ENCODE measurements at regions of chr15 and their contacts with region 1.

Region 1: GRCh38 chr15:73991726-73992593 is at the start of gene STOML1:
- DNase-seq: peak; percentile 85 to 96 (median 92)
- ATAC-seq: peak; percentile 81 to 85
- H3K4me3 Mint-ChIP-seq: peak within 1 kb of the TSS; percentile 78 to 99 (median 86)
- H3K27ac Mint-ChIP-seq: peak within 1 kb of the TSS; percentile 75 to 86 (median 80)
- H3K4me1 Mint-ChIP-seq: peaks cover 24 to 63% (median 51%) of the 10 kb centered on the region in 4 donors
- H3K27me3 Mint-ChIP-seq: no peaks in the 10 kb centered on the region
- polyA plus RNA-seq, gene STOML1: 9.6 to 15.6 (median 12.6) TPM

Region 2: GRCh38 chr15:73972984-73973682 is 18.8 kb before region 1 on chr15:
- POLR2A ChIA-PET with region 1: interaction called, 10 read pairs
- DNase-seq: peak; percentile 62 to 85 (median 77)
- ATAC-seq: peak; percentile 80
- H3K4me3 Mint-ChIP-seq: peak overlapping the region in 7 of 10 donors; percentile 15 to 80 (median 36)
- H3K27ac Mint-ChIP-seq: peak overlapping the region in 2 of 10 donors; percentile 7 to 32
- H3K4me1 Mint-ChIP-seq: peaks cover 14 to 38% (median 32%) of the 10 kb centered on the region in 4 donors
- H3K27me3 Mint-ChIP-seq: peaks cover 0 to 18% (median 3%) of the 10 kb centered on the region in 5 donors

Region 3: GRCh38 chr15:74007820-74008371 is 15.9 kb after region 1 on chr15:
- POLR2A ChIA-PET with region 1: interaction called, 28 read pairs
- DNase-seq: peak in 3 of 10 donors; percentile 19 to 46 (median 34)
- ATAC-seq: peak; percentile 82 to 89
- H3K4me3 Mint-ChIP-seq: peak overlapping the region; percentile 42 to 82 (median 70)
- H3K27ac Mint-ChIP-seq: peak overlapping the region; percentile 56 to 96 (median 89)
- H3K4me1 Mint-ChIP-seq: peaks cover 38 to 76% (median 71%) of the 10 kb centered on the region in 4 donors
- H3K27me3 Mint-ChIP-seq: no peaks in the 10 kb centered on the region

Measured in naive thymus-derived CD8-positive, alpha-beta T cell (primary cell).